ENCODE measurements at regions of chr12 and their contacts with region 1.

Region 1: DNA sequence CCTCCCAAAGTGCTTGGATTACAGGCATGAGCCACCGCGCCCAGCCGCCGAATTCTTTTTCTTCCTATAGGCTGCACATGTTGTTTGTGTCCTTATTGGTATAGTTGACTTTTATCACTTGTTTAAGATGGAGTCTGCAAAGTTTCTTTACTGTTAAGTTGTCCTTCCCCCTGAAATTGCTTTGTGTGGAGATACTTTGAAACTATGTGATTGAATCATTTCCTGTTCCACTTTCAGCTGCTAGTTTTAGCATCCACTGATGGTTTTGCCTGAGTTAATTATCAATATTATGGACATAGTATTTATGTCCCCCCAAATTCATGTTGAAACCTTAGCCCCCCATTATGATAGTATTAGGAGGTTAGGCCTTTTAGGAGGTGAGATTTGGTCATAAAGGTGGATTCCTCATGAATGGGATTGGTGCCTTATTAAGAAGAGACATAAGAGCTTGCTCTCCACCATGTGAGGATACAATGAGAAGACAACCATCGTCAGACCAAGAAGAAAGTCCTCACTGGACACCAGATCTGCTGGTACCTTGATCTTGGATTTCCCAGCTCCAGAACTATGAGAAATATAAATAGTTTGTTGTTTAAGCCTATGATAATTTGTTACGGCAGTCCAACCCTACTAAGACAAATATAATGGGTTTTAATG is 34.9 kb downstream of the PPHLN1 start:
- DNase-seq: no peak
- ATAC-seq: peak; percentile 53
- H3K4me3 Mint-ChIP-seq: no peak overlapping the region
- H3K27ac Mint-ChIP-seq: peak overlapping the region; percentile 72
- H3K4me1 Mint-ChIP-seq: peaks cover 23% of the 10 kb centered on the region
- H3K27me3 Mint-ChIP-seq: no peaks in the 10 kb centered on the region

Region 2: DNA sequence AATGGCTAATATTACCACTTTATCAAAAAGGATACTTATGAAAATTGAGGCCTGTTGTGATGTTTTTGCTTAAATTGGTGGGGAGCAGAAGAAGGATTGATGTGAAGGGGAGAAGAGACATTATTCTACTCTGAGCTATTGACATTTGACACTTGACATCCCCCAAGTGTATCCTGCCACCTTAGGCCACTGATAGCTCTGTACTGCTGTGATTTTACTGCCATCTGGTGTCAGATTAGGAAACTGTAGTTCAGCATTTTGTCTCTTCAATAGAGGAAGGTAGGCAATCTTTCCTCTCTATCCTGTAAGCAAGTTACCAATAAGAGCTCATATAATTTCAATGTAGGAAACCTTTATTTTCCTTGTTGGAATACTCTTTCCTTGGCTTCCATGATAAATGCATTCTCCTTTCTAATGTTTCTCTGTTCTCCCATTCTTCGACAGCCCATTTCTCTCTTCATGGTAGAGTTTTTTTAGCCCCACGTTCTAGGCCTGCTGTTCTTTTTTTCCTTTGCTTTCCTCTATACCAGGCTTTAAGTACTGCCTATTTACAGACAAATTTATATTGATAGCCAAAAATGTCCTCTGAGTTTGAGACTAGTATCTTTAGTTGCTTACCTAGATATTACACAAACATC is 11.4 kb after region 1 on chr12:
- CTCF ChIA-PET with region 1: interaction called, 26 read pairs
- DNase-seq: peak; percentile 46
- ATAC-seq: peak; percentile 86
- H3K4me3 Mint-ChIP-seq: no peak overlapping the region
- H3K27ac Mint-ChIP-seq: no peak overlapping the region
- H3K4me1 Mint-ChIP-seq: peaks cover 2% of the 10 kb centered on the region
- H3K27me3 Mint-ChIP-seq: no peaks in the 10 kb centered on the region

Measured in activated CD8-positive, alpha-beta memory T cell treated with anti-CD3 and anti-CD28 coated beads, Interleukin-2, amount 10 ng/mL, durations not matched to agents 7 days and 5 days (primary cell).